ENCODE measurements at regions of chr5 and their contacts with region 1.

Region 1: DNA sequence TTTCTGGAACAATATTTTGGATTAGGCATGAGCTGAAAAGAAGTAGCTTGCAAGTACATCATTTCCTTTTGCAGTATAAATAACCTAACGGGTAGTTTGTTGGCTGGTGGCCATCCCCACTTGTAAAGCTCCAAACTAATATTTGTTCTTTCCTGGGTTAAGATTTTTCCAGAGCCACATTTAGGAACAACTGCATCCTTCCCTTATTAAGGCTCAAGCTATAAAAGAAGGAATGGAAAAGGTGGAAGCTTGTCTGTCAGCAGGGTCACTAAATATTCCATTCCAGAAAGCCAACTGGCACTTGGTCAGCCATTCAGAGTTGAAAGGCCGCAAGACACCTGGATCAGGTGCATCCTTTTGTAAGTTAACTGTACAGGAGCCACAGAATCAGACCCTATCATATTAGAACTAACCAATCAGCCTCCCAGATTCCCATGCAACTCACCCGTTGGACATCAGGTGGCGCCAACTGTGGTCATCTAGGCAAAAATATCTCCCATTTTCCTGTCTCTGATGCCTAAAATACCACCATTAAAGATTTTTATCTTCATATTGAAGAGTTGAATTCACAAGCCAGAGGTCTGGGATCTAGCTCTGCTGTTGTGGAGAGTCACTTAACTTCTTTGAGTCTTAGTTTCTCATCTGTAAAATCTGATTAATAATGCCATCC is 82.9 kb downstream of the PTCD2 start:
- DNase-seq: peak in 1 of 2 donors; percentile 88
- H3K4me3 ChIP-seq: no peak overlapping the region
- H3K27ac ChIP-seq: peak overlapping the region; percentile 75 to 77
- H3K4me1 ChIP-seq: peaks cover 0 to 11% of the 10 kb centered on the region in 2 donors
- H3K27me3 ChIP-seq: no peaks in the 10 kb centered on the region
- CTCF ChIP-seq: peak in 2 of 3 experiments; percentile 27 to 35

Region 2: DNA sequence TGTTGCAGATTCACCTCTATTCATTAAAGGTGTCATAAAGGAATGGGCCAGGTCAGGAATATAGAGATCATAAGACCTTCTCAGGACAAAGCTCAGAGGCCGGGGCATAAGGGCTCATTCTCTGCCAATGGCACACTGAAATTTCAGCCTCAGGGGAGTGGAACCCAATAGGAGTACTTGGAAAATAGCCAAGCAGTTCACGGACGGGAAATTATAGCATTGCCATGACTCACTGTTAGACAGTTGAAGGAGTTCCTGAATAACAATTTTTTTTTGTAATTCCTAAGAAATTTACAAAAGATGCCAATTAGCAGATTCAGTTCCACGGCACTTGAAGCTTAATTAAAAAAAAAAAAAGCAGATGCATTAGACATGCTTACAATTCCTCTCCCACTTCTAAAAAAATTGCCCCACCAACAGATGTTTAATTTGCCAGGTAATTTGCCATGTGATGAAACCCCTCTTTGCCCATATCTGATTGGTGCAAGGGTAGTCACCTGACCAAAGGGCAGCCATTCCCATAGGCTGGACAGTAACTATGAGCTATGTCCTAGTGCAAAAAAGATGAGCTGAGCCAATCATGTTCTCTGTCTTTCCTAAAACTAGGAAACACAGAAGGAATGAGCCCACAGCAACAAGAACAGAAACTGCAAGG is 24.3 kb before region 1 on chr5:
- intact Hi-C with region 1: loop called (anchors 1 kb)
- DNase-seq: peak in 1 of 2 donors; percentile 87
- H3K4me3 ChIP-seq: no peak overlapping the region
- H3K27ac ChIP-seq: peak overlapping the region in 1 of 2 donors; percentile 46
- H3K4me1 ChIP-seq: peaks cover 3 to 14% of the 10 kb centered on the region in 2 donors
- H3K27me3 ChIP-seq: no peaks in the 10 kb centered on the region
- CTCF ChIP-seq: no peak

Measured in ascending aorta (tissue), 2 donors.